Activated CD4-positive, alpha-beta memory T cell treated with anti-CD3 and anti-CD28 coated beads for 36 hours (primary cell): ENCODE measurements at regions of chr6 and their contacts with region 1.

Region 1: GRCh38 chr6:99868074-99868702 is 125.8 kb downstream of the MCHR2 start:
- DNase-seq: peak; percentile 81
- H3K4me3 Mint-ChIP-seq: no peak overlapping the region
- H3K27ac Mint-ChIP-seq: no peak overlapping the region
- H3K4me1 Mint-ChIP-seq: peaks cover 4% of the 10 kb centered on the region
- H3K27me3 Mint-ChIP-seq: peaks cover 25% of the 10 kb centered on the region

Region 2: DNA sequence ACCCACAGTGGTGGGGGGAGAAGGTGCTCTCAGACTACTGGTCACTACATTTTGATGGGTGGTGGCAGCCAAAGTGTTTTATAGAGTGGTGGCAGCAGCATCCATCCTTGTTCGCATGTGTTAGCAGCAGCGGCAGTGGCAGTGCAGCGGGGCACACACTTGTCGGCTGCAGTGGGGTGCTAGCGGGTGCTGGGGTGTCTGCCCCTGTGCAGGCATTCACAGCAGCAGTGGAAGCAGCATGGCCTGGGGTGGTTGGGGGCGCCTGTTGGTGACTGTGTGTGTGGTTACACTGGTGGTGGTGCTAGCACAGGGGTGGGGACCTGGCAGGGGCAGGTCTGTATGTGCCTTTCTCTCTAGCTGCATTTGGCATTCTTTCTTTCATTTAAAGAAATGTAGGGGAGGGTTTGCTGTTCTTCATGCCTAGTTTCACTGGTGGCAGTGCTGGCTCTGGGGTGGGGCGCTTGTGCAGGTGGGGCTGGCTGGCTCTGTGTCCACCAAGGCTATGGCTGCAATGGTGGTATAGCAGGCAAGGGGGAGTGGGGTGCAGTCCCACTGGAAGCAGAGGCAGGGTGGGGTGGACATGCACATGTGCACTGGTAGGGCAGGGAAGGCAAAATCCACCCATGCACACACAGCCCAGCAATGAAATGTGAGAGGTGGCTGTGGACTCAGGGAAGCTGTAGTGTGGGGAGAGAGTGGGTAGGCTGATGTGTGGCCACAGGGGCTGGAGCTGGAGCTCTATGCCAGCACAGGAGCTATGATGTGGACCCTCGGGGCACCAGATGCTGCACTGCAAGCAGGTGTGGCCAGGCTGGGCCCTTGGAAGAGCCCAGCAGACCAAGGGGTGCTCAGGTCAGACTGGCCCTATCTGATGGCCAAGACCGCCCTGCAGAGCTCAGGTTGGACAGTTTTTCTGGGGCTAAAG is 88.3 kb before region 1 on chr6:
- CTCF ChIA-PET with region 1: no interaction called
- POLR2A ChIA-PET with region 1: no interaction called
- intact Hi-C with region 1: no loop called
- DNase-seq: no peak
- H3K4me3 Mint-ChIP-seq: no peak overlapping the region
- H3K27ac Mint-ChIP-seq: no peak overlapping the region
- H3K4me1 Mint-ChIP-seq: no peaks in the 10 kb centered on the region
- H3K27me3 Mint-ChIP-seq: peaks cover 32% of the 10 kb centered on the region

Region 3: GRCh38 chr6:99882128-99882702 is 14.0 kb after region 1 on chr6:
- CTCF ChIA-PET with region 1: interaction called, 31 read pairs
- POLR2A ChIA-PET with region 1: no interaction called
- intact Hi-C with region 1: no loop called
- DNase-seq: no peak
- H3K4me3 Mint-ChIP-seq: no peak overlapping the region
- H3K27ac Mint-ChIP-seq: no peak overlapping the region
- H3K4me1 Mint-ChIP-seq: no peaks in the 10 kb centered on the region
- H3K27me3 Mint-ChIP-seq: peaks cover 3% of the 10 kb centered on the region

Region 4: DNA sequence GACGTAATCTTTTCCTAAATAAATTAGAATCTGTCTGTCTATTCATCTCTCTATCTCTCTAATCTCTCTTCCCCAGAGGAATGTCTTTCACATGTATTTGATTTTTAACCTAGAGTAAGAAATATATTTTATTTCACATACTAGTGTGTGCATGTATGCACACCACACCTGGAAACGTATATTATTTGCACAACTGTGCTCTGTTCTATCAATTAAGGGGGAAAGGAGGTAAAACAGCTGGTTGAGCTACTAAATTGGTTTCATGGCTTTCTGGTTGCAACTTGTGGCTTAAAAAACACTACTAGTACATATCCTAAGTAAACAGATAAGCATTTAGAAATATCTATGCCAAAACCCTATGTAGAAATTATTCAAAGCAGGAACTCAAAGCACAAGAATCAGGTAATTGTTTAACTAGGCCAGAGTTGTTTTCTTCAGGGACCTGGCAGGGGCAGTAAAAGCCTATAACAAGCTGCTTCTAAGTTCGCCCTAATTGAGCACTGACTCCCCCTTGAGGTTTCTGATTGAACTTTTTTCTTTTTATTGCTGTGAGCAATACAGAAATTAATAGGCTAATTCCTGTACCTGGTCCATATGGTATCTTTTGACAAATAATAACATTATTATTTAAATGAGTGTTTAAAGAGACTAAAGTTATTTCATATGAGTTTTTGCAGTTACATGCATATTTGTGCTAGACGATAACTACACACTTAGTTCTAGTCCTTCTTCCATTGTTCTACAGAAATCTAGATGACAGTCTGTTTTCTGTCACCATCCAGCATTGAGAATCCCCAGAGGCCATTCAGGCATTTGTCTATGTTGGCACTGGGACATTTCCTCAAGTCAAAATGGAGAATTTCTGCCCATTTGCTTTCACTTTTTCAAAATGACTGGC is 37.3 kb after region 1 on chr6:
- CTCF ChIA-PET with region 1: interaction called, 19 read pairs
- POLR2A ChIA-PET with region 1: no interaction called
- intact Hi-C with region 1: no loop called
- DNase-seq: no peak
- H3K4me3 Mint-ChIP-seq: no peak overlapping the region
- H3K27ac Mint-ChIP-seq: no peak overlapping the region
- H3K4me1 Mint-ChIP-seq: no peaks in the 10 kb centered on the region
- H3K27me3 Mint-ChIP-seq: peaks cover 7% of the 10 kb centered on the region

Region 5: DNA sequence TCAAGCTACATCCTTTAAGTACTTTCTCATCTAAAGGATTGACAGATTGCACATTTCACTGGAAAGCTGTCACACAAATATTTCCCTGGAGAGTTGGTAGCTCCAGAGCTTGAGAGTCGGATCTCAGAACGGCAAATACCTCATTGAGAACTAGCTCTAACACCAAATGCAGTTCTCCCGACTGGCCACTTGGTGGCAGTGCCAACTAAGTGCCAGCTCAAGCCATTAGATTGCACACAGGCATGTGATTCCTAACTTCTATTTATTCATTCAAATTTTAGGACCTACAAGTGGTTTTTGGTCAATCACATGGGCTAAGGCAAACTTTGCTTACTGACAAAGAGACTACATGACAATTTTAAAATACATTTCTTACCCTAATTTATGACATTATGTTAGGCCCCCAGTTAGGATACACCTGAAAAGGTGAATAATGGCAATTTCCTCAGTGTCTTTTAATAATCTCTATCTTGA is 133.8 kb after region 1 on chr6:
- CTCF ChIA-PET with region 1: interaction called, 17 read pairs
- POLR2A ChIA-PET with region 1: no interaction called
- intact Hi-C with region 1: loop called (anchors 5 kb)
- DNase-seq: peak; percentile 48
- H3K4me3 Mint-ChIP-seq: no peak overlapping the region
- H3K27ac Mint-ChIP-seq: no peak overlapping the region
- H3K4me1 Mint-ChIP-seq: no peaks in the 10 kb centered on the region
- H3K27me3 Mint-ChIP-seq: peaks cover 23% of the 10 kb centered on the region

Region 6: GRCh38 chr6:100099189-100100074 is 231.2 kb after region 1 on chr6:
- CTCF ChIA-PET with region 1: interaction called, 78 read pairs
- POLR2A ChIA-PET with region 1: no interaction called
- intact Hi-C with region 1: loop called (anchors 1 kb)
- DNase-seq: no peak
- H3K4me3 Mint-ChIP-seq: no peak overlapping the region
- H3K27ac Mint-ChIP-seq: no peak overlapping the region
- H3K4me1 Mint-ChIP-seq: no peaks in the 10 kb centered on the region
- H3K27me3 Mint-ChIP-seq: peaks cover 12% of the 10 kb centered on the region

Region 7: GRCh38 chr6:100479179-100480035 is 611.2 kb after region 1 on chr6:
- CTCF ChIA-PET with region 1: no interaction called
- POLR2A ChIA-PET with region 1: no interaction called
- intact Hi-C with region 1: loop called (anchors 2 kb)
- DNase-seq: no peak
- H3K4me3 Mint-ChIP-seq: no peak overlapping the region
- H3K27ac Mint-ChIP-seq: no peak overlapping the region
- H3K4me1 Mint-ChIP-seq: peaks cover 2% of the 10 kb centered on the region
- H3K27me3 Mint-ChIP-seq: peaks cover 14% of the 10 kb centered on the region